Naive thymus-derived CD4-positive, alpha-beta T cell (primary cell): ENCODE measurements at regions of chr7 and their contacts with region 1.

Region 1: GRCh38 chr7:118153551-118154177 is 30.3 kb upstream of the LSM8 start:
- DNase-seq: peak in 6 of 9 donors; percentile 4 to 34 (median 24)
- ATAC-seq: peak; percentile 70
- H3K4me3 ChIP-seq: no peak overlapping the region
- H3K4me3 Mint-ChIP-seq: no peak overlapping the region
- H3K27ac ChIP-seq: no peak overlapping the region
- H3K27ac Mint-ChIP-seq: no peak overlapping the region
- H3K4me1 ChIP-seq: no peaks in the 10 kb centered on the region
- H3K4me1 Mint-ChIP-seq: no peaks in the 10 kb centered on the region
- H3K27me3 ChIP-seq: peaks cover 0 to 3% of the 10 kb centered on the region in 2 donors
- H3K27me3 Mint-ChIP-seq: peaks cover 10 to 36% (median 23%) of the 10 kb centered on the region in 5 donors

Region 2: GRCh38 chr7:117212969-117213877 is 940.4 kb before region 1 on chr7:
- CTCF ChIA-PET with region 1: no interaction called
- POLR2A ChIA-PET with region 1: no interaction called
- intact Hi-C with region 1: loop called in 1 of 2 experiments (anchors 1 kb)
- DNase-seq: peak in 5 of 9 donors; percentile 15 to 32 (median 27)
- ATAC-seq: peak; percentile 83
- H3K4me3 ChIP-seq: no peak overlapping the region
- H3K4me3 Mint-ChIP-seq: no peak overlapping the region
- H3K27ac ChIP-seq: no peak overlapping the region
- H3K27ac Mint-ChIP-seq: no peak overlapping the region
- H3K4me1 ChIP-seq: no peaks in the 10 kb centered on the region
- H3K4me1 Mint-ChIP-seq: no peaks in the 10 kb centered on the region
- H3K27me3 ChIP-seq: no peaks in the 10 kb centered on the region
- H3K27me3 Mint-ChIP-seq: peaks cover 0 to 2% (median 0%) of the 10 kb centered on the region in 5 donors

Region 3: GRCh38 chr7:117458977-117459583 is 694.6 kb before region 1 on chr7:
- CTCF ChIA-PET with region 1: no interaction called
- POLR2A ChIA-PET with region 1: no interaction called
- intact Hi-C with region 1: loop called in 1 of 2 experiments (anchors 10 kb)
- DNase-seq: no peak
- ATAC-seq: no peak
- H3K4me3 ChIP-seq: no peak overlapping the region
- H3K4me3 Mint-ChIP-seq: no peak overlapping the region
- H3K27ac ChIP-seq: no peak overlapping the region
- H3K27ac Mint-ChIP-seq: no peak overlapping the region
- H3K4me1 ChIP-seq: no peaks in the 10 kb centered on the region
- H3K4me1 Mint-ChIP-seq: no peaks in the 10 kb centered on the region
- H3K27me3 ChIP-seq: no peaks in the 10 kb centered on the region
- H3K27me3 Mint-ChIP-seq: no peaks in the 10 kb centered on the region

Region 4: GRCh38 chr7:117750612-117751563 is 402.8 kb before region 1 on chr7:
- CTCF ChIA-PET with region 1: interaction called, 3 read pairs
- POLR2A ChIA-PET with region 1: no interaction called
- intact Hi-C with region 1: loop called in 1 of 2 experiments (anchors 2 kb)
- DNase-seq: no peak
- ATAC-seq: no peak
- H3K4me3 ChIP-seq: no peak overlapping the region
- H3K4me3 Mint-ChIP-seq: no peak overlapping the region
- H3K27ac ChIP-seq: no peak overlapping the region
- H3K27ac Mint-ChIP-seq: no peak overlapping the region
- H3K4me1 ChIP-seq: no peaks in the 10 kb centered on the region
- H3K4me1 Mint-ChIP-seq: no peaks in the 10 kb centered on the region
- H3K27me3 ChIP-seq: no peaks in the 10 kb centered on the region
- H3K27me3 Mint-ChIP-seq: peaks cover 0 to 5% (median 3%) of the 10 kb centered on the region in 5 donors

Region 5: GRCh38 chr7:118195837-118196474 is 42.3 kb after region 1 on chr7:
- CTCF ChIA-PET with region 1: no interaction called
- POLR2A ChIA-PET with region 1: no interaction called
- intact Hi-C with region 1: loop called in 1 of 2 experiments (anchors 1 kb)
- DNase-seq: peak in 8 of 9 donors; percentile 14 to 56 (median 43)
- ATAC-seq: peak; percentile 86
- H3K4me3 ChIP-seq: no peak overlapping the region
- H3K4me3 Mint-ChIP-seq: no peak overlapping the region
- H3K27ac ChIP-seq: no peak overlapping the region
- H3K27ac Mint-ChIP-seq: peak overlapping the region in 6 of 9 donors; percentile 1 to 81 (median 40)
- H3K4me1 ChIP-seq: no peaks in the 10 kb centered on the region
- H3K4me1 Mint-ChIP-seq: peaks cover 0 to 12% (median 5%) of the 10 kb centered on the region in 7 donors
- H3K27me3 ChIP-seq: no peaks in the 10 kb centered on the region
- H3K27me3 Mint-ChIP-seq: no peaks in the 10 kb centered on the region

Region 6: DNA sequence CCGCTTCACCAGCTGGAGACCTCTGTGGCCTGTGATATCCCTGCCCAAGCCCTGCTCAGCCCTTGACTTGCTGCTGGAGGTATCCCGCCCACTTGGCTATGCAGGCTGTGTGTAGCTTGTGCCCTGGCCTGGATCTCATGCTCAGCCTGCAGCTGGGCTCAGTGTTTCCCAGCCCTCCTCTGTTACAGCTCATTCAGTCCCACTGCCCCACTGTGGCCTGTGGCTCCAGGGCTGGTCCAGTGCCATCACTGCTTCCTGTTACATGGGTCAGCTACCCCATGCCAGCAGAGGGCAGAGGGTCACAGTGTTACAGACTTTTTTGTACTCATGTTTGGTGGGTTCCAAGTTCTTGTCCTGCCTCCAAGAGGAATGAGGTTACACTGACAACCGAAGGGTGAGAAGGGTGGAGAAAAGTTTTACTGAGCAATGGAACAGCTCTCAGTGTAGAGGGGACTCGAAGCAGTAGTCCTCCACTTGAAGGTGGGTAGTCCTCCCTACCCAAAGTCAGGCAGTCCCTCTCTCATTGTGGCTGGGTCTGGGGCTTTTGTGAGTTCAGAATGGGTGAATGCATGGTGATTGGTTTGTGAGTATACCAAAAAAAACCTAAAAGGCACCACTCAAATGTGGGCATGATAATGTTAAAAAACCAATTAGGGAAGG is 171.3 kb after region 1 on chr7:
- CTCF ChIA-PET with region 1: no interaction called
- POLR2A ChIA-PET with region 1: no interaction called
- intact Hi-C with region 1: no loop called
- DNase-seq: no peak
- ATAC-seq: no peak
- H3K4me3 ChIP-seq: no peak overlapping the region
- H3K4me3 Mint-ChIP-seq: no peak overlapping the region
- H3K27ac ChIP-seq: no peak overlapping the region
- H3K27ac Mint-ChIP-seq: no peak overlapping the region
- H3K4me1 ChIP-seq: no peaks in the 10 kb centered on the region
- H3K4me1 Mint-ChIP-seq: peaks cover 0 to 6% (median 0%) of the 10 kb centered on the region in 7 donors
- H3K27me3 ChIP-seq: no peaks in the 10 kb centered on the region
- H3K27me3 Mint-ChIP-seq: peaks cover 7 to 27% (median 23%) of the 10 kb centered on the region in 5 donors